Aorta (tissue), 5 donors: ENCODE measurements at regions of chr5 and their contacts with region 1.

Region 1: DNA sequence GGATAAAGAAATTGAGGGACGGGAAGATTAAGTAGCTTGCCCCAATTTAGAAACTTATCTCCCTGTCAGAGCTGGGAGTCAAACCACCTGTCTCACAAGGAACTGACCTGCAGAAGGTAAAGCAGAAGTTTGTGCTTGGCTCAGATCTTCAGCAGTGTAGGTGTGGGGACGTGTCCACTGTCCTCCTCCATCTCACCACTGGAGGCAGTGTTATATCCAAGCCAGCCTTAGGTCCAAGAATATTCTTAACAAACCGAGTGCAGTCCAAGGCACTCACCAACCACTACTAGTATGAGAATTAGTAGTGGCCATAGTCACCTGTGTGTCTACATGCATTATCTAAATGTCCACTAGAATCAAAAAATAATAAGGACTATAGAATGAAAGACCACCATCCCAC is 86.3 kb upstream of the IRX1 start:
- DNase-seq: no peak
- ATAC-seq: no peak
- H3K4me3 ChIP-seq: no peak overlapping the region
- H3K27ac ChIP-seq: no peak overlapping the region
- H3K4me1 ChIP-seq: no peaks in the 10 kb centered on the region
- H3K27me3 ChIP-seq: no peaks in the 10 kb centered on the region

Region 2: DNA sequence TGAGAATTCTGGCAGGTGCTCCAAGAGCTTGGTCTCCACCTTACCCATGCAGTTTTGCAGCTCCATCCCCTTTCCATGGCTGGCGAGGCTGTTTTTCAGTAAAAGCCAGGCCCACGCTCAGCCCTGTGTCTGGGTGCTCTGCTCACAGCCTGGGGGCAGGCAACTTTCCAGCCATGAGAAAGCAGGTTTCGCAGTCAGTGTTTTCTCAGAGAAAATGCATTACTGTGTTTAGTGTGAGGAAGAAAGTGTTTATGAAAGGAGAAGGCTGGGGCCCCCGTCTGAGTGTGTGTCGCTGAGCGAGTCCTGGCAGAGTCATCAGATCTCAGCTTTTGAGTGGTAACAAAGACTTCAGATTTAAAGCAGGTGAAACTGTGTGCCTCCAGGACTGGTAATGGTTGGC is 334.4 kb after region 1 on chr5:
- intact Hi-C with region 1: loop called in 1 of 2 experiments (anchors 10 kb)
- DNase-seq: no peak
- ATAC-seq: no peak
- H3K4me3 ChIP-seq: no peak overlapping the region
- H3K27ac ChIP-seq: no peak overlapping the region
- H3K4me1 ChIP-seq: no peaks in the 10 kb centered on the region
- H3K27me3 ChIP-seq: no peaks in the 10 kb centered on the region